Breast epithelium (tissue), 4 donors: ENCODE measurements at regions of chr5 and their contacts with region 1.

Region 1: GRCh38 chr5:78008356-78008967 is 232.3 kb upstream of the TBCA start:
- DNase-seq: no peak
- H3K4me3 ChIP-seq: no peak overlapping the region
- H3K27ac ChIP-seq: no peak overlapping the region
- H3K4me1 ChIP-seq: no peaks in the 10 kb centered on the region
- H3K27me3 ChIP-seq: no peaks in the 10 kb centered on the region
- CTCF ChIP-seq: peak in 2 of 3 donors; percentile 51 to 52
- POLR2A ChIP-seq: no peak

Region 2: DNA sequence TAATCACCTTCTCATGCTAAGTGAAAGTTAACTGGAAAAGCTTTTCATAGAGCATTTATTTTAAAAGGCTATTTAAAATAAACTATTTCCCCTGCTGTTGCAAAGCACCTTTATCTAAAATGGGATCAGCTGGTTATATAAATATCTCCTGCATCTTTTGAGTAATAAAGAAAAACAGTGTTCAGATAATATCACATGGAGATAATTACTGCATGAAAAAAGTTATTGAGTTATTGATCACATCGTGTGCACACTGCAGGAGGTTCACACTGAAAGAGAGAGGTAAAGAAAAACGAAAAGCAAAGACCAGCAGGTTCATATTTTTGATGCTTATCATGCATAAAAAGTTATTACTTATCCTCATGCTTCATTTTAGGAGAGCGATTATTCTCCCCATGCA is 314.6 kb before region 1 on chr5:
- intact Hi-C with region 1: loop called (anchors 5 kb)
- DNase-seq: no peak
- H3K4me3 ChIP-seq: no peak overlapping the region
- H3K27ac ChIP-seq: no peak overlapping the region
- H3K4me1 ChIP-seq: no peaks in the 10 kb centered on the region
- H3K27me3 ChIP-seq: no peaks in the 10 kb centered on the region
- CTCF ChIP-seq: no peak
- POLR2A ChIP-seq: no peak

Region 3: DNA sequence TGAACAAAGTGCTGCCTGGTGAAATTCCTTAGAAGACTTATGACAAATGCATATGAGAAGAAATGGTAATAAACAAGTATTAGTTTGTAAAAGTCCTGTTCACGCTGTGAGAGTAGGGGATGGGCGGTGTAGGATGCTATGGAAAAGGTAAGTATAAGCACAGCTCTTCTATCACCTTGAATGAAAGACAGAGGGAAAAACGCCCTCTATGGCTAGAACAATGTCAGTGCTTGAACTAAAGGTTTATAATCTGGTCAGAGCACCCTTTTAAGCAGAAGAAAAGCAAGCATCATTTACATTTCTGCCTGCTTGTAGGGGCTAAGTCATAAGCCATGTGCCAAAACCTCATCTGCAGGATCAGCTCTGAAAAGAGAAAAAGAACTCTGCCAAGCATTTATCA is 524.9 kb after region 1 on chr5:
- intact Hi-C with region 1: no loop called
- DNase-seq: no peak
- H3K4me3 ChIP-seq: no peak overlapping the region
- H3K27ac ChIP-seq: peak overlapping the region; percentile 85 to 95
- H3K4me1 ChIP-seq: peaks cover 3 to 6% of the 10 kb centered on the region in 2 donors
- H3K27me3 ChIP-seq: no peaks in the 10 kb centered on the region
- CTCF ChIP-seq: no peak
- POLR2A ChIP-seq: no peak